Stomach (tissue), 19 donors: ENCODE measurements at regions of chrX and their contacts with region 1.

Region 1: GRCh38 chrX:34028488-34028887 is 103.6 kb downstream of the FAM47A start:
- DNase-seq: peak in 1 of 2 donors; percentile 4
- H3K4me3 ChIP-seq: no peak overlapping the region
- H3K27ac ChIP-seq: no peak overlapping the region
- H3K4me1 ChIP-seq: no peaks in the 10 kb centered on the region
- H3K27me3 ChIP-seq: no peaks in the 10 kb centered on the region
- CTCF ChIP-seq: no peak
- EP300 ChIP-seq: no peak
- POLR2A ChIP-seq: no peak

Region 2: DNA sequence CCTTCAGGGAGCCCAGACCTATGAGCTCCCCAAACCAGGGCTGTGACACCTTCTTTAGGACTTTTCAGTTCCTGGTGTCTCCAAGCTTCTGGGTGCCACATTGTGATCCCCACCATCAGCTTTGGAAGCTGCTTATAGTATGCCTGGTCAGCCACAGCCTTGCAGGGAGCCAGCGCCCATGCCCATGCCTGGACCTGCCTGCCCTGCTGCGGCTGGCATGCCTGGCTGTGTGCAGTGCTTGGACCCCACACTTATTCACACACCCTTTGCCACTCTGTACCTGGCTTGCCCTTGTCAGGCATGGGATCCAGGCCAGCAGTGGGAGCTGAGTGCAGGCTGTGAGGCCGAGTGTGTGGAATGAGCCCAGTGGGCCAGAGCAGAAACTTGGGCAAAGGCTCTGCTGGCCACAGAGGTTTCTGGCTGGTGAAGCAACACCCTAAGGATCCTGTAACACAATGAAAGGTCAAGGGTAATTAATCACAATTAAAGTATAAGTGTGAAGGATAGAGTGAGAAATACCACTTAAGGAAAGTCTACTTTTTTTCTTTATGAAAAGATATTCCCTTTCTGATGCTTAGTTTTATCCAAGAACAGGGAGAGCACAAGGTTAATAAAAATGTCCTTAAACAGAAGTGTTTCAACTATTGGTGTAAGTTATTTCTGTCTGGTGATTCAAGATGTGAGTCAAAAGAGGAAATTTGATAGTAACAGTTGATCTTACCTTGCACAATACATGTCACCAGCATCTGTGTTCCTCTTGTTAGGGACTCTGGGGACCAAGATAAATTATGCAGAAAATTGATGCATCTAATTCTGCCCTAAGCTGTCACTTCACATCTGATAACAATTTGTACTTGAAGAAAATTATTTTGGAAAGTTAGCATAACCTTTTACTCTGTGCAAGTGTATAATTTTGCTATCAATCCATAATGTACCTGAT is 58.2 kb before region 1 on chrX:
- intact Hi-C with region 1: no loop called
- DNase-seq: no peak
- H3K4me3 ChIP-seq: no peak overlapping the region
- H3K27ac ChIP-seq: no peak overlapping the region
- H3K4me1 ChIP-seq: no peaks in the 10 kb centered on the region
- H3K27me3 ChIP-seq: peaks cover 0 to 7% (median 0%) of the 10 kb centered on the region in 3 donors
- CTCF ChIP-seq: no peak
- EP300 ChIP-seq: no peak
- POLR2A ChIP-seq: no peak

Region 3: DNA sequence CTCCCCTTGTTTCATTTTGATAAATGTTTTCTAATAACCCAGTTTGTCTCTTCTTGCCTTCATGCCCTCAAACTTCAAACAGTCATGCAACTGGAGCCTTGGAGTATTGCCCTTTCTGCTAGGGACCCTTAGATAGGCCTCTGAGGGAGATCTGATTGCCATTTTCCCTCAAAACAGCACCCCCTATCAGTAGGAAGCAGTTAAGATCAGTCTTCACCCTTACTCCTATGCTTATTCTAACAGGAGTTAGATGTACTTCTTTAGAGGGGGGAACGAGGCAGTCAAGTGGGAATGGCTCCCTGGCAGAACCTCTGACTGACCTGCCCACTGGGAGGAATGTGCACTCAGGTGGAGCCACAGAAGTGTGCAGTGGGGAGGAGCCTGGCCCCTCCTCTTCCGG is 29.5 kb after region 1 on chrX:
- intact Hi-C with region 1: loop called (anchors 5 kb)
- DNase-seq: no peak
- H3K4me3 ChIP-seq: no peak overlapping the region
- H3K27ac ChIP-seq: no peak overlapping the region
- H3K4me1 ChIP-seq: no peaks in the 10 kb centered on the region
- H3K27me3 ChIP-seq: no peaks in the 10 kb centered on the region
- CTCF ChIP-seq: no peak
- EP300 ChIP-seq: no peak
- POLR2A ChIP-seq: no peak